Keratinocyte (primary cell): ENCODE measurements at regions of chr9 and their contacts with region 1.

Region 1: DNA sequence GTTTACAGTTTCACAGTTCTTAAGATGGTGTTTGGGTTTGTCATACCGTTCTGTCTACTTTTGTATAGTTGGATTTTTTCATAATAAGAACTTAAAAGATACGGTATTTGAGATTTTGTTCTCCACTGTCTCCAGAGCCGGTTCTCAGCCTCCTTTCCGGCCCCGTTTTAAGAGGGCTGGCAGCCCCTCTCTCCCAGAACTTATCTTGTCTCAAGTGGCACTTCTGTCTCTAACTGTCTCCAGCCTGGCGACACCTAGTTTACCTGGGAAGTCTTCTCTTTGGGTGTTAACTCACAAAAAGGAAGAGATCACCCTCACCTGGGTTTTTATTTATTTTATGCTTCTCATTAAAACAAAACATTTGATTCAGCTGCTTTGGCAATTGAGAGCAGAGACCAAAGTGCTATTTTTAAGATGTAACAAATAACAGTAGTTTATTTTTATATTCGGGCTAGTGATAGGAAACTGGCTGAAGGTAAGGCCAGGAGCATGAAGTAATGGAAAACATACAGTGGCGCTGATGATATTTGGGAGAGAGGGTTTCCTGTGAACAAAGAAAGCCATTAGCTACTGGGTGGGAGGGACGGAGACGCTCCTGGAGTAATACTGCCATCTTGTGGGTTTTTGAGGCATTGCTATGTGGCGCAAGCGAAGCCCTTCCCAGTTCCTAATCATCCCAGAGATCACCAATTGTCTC is 48.3 kb downstream of the ACER2 start:
- DNase-seq: peak; percentile 36
- H3K4me3 ChIP-seq: no peak overlapping the region
- H3K27ac ChIP-seq: no peak overlapping the region
- H3K4me1 ChIP-seq: no peaks in the 10 kb centered on the region
- H3K27me3 ChIP-seq: no peaks in the 10 kb centered on the region
- CTCF ChIP-seq: peak; percentile 92 to 95 (median 92)

Region 2: DNA sequence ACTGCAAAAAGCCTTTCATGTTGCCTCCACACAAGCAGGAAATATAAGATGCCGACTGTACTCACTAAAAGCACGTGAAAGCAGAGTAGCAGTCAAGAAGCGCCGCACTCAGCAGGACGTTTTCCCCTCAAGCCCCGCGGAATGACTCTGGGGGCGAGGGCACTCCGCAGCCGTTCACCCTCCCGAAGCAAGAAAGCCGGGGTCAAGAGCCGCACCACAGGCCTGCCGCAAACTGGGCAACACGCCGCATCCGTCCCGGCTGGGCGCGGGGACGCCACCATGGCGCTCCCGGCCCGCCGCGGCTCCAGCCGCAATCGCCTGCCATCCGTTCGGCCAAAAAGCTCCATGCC is 77.5 kb before region 1 on chr9:
- dilution Hi-C with region 1: loop called (anchors 10 kb)
- DNase-seq: no peak
- H3K4me3 ChIP-seq: peak overlapping the region; percentile 76 to 98 (median 95)
- H3K27ac ChIP-seq: peak overlapping the region; percentile 92
- H3K4me1 ChIP-seq: peaks cover 29% of the 10 kb centered on the region
- H3K27me3 ChIP-seq: no peaks in the 10 kb centered on the region
- CTCF ChIP-seq: no peak

Region 3: DNA sequence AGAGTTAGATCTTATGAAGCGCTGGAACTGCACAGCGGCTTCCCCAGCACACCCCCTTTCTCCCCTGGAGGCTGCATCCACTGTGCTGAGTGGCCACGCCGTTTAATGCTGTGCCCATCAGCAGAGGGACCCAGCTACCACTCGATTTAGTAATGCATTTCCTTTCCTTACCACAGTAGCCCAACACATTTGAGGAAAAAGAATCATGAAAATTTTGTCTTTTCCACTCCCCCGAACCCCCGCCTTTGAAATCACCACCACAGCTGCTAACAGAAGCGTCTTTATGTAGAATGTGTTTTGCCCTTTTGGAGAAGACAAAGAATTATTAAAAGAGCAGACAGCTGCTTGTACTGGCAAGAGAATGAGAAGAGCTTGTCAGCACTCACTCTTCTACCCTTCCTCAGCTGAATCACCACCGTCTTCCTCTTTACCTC is 24.8 kb after region 1 on chr9:
- dilution Hi-C with region 1: no loop called
- DNase-seq: no peak
- H3K4me3 ChIP-seq: no peak overlapping the region
- H3K27ac ChIP-seq: no peak overlapping the region
- H3K4me1 ChIP-seq: no peaks in the 10 kb centered on the region
- H3K27me3 ChIP-seq: peaks cover 5% of the 10 kb centered on the region
- CTCF ChIP-seq: no peak

Region 4: GRCh38 chr9:19551124-19551929 is 94.2 kb after region 1 on chr9:
- dilution Hi-C with region 1: no loop called
- DNase-seq: no peak
- H3K4me3 ChIP-seq: no peak overlapping the region
- H3K27ac ChIP-seq: no peak overlapping the region
- H3K4me1 ChIP-seq: no peaks in the 10 kb centered on the region
- H3K27me3 ChIP-seq: no peaks in the 10 kb centered on the region
- CTCF ChIP-seq: no peak

Region 5: GRCh38 chr9:19648672-19649071 is 191.5 kb after region 1 on chr9:
- dilution Hi-C with region 1: no loop called
- DNase-seq: no peak
- H3K4me3 ChIP-seq: no peak overlapping the region
- H3K27ac ChIP-seq: no peak overlapping the region
- H3K4me1 ChIP-seq: no peaks in the 10 kb centered on the region
- H3K27me3 ChIP-seq: no peaks in the 10 kb centered on the region
- CTCF ChIP-seq: no peak